ENCODE measurements at regions of chr2 and their contacts with region 1.

Region 1: GRCh38 chr2:197705121-197705911 is at the start of gene MARS2:
- DNase-seq: peak; percentile 70 to 89
- H3K4me3 ChIP-seq: peak within 1 kb of the TSS; percentile 98
- H3K27ac ChIP-seq: no peak within 1 kb of the TSS
- H3K4me1 ChIP-seq: peaks cover 15% of the 10 kb centered on the region
- H3K27me3 ChIP-seq: no peaks in the 10 kb centered on the region
- CTCF ChIP-seq: no peak
- total RNA-seq, gene MARS2: 5.1 and 6.0 TPM in 2 replicates

Region 2: GRCh38 chr2:197255543-197255942 is 449.8 kb before region 1 on chr2:
- CTCF ChIA-PET with region 1: no interaction called
- POLR2A ChIA-PET with region 1: no interaction called
- intact Hi-C with region 1: no loop called
- DNase-seq: no peak
- H3K4me3 ChIP-seq: no peak overlapping the region
- H3K27ac ChIP-seq: no peak overlapping the region
- H3K4me1 ChIP-seq: no peaks in the 10 kb centered on the region
- H3K27me3 ChIP-seq: no peaks in the 10 kb centered on the region
- CTCF ChIP-seq: no peak

Region 3: GRCh38 chr2:197499594-197500526 is 205.5 kb before region 1 on chr2 and contains the starts of genes HSPD1 and HSPE1:
- CTCF ChIA-PET with region 1: no interaction called
- POLR2A ChIA-PET with region 1: interaction called, 4 read pairs
- intact Hi-C with region 1: loop called (anchors 5 kb)
- DNase-seq: peak; percentile 97 to 98
- H3K4me3 ChIP-seq: peak within 1 kb of the TSS; percentile 99
- H3K27ac ChIP-seq: peak within 1 kb of the TSS; percentile 74
- H3K4me1 ChIP-seq: peaks cover 43% of the 10 kb centered on the region
- H3K27me3 ChIP-seq: no peaks in the 10 kb centered on the region
- CTCF ChIP-seq: no peak
- total RNA-seq, gene HSPD1: 532 and 557 TPM in 2 replicates
- total RNA-seq, gene HSPE1: 113 and 219 TPM in 2 replicates

Region 4: GRCh38 chr2:197777823-197778407 is 72.6 kb after region 1 on chr2:
- CTCF ChIA-PET with region 1: no interaction called
- POLR2A ChIA-PET with region 1: no interaction called
- intact Hi-C with region 1: loop called (anchors 5 kb)
- DNase-seq: no peak
- H3K4me3 ChIP-seq: no peak overlapping the region
- H3K27ac ChIP-seq: no peak overlapping the region
- H3K4me1 ChIP-seq: no peaks in the 10 kb centered on the region
- H3K27me3 ChIP-seq: no peaks in the 10 kb centered on the region
- CTCF ChIP-seq: peak; percentile 85

Region 5: GRCh38 chr2:198296665-198297308 is 591.5 kb after region 1 on chr2:
- CTCF ChIA-PET with region 1: no interaction called
- POLR2A ChIA-PET with region 1: no interaction called
- intact Hi-C with region 1: loop called (anchors 2 kb)
- DNase-seq: peak; percentile 35 to 42
- H3K4me3 ChIP-seq: no peak overlapping the region
- H3K27ac ChIP-seq: no peak overlapping the region
- H3K4me1 ChIP-seq: no peaks in the 10 kb centered on the region
- H3K27me3 ChIP-seq: peaks cover 2% of the 10 kb centered on the region; the same call in 1 of the 2 replicates
- CTCF ChIP-seq: peak; percentile 74

Measured in PC-9 (cell line).